Activated naive CD4-positive, alpha-beta T cell treated with anti-CD3 and anti-CD28 coated beads, Interleukin-2, amount 10 ng/mL, durations not matched to agents 7 days and 5 days (primary cell): ENCODE measurements at regions of chr3 and their contacts with region 1.

Region 1: GRCh38 chr3:88003115-88003755 is 55.6 kb downstream of the CGGBP1 start:
- DNase-seq: no peak
- H3K4me3 Mint-ChIP-seq: no peak overlapping the region
- H3K27ac Mint-ChIP-seq: no peak overlapping the region
- H3K4me1 Mint-ChIP-seq: peaks cover 9% of the 10 kb centered on the region
- H3K27me3 Mint-ChIP-seq: peaks cover 5% of the 10 kb centered on the region

Region 2: DNA sequence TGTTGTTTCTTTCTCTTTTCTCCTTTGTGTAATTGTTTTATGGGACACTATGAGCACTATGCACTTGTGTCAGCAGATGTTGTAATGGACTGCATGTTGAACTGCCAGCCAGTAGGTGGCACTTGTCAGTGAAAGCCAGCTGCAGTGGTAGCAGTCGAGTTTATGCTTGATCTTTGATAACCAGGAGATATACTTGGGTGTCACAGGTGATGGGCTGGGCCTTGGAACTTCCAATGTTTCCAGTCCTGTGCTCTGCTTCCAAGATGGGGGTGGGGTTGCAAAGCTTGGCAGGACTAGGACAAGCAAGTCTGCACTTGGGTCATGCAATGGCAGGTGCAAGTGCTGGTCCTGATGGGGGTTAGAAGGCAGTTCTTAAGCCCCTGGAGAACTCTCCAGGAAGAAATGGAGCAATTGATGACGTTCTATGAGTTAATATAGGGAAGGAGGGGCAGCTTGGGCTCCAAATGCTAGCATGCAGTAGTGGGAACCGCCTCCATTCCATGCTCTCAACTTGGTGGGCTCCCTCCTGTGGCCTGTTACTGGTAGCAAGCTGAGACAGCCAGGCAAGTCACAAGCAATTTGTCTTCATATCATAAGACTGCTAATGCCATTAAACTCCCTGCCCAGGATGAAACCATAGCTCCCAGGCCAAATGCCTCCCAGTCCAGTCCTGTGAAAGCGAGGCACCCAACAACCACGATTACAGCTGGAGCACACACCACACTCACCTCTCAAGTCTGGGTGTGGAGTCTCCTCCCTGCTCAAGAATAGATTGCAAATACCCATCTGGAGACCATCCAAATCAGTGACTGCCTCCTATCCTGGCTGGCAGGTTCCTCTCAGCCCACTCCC is 231.7 kb before region 1 on chr3:
- CTCF ChIA-PET with region 1: interaction called, 17 read pairs
- DNase-seq: peak; percentile 55
- H3K4me3 Mint-ChIP-seq: no peak overlapping the region
- H3K27ac Mint-ChIP-seq: no peak overlapping the region
- H3K4me1 Mint-ChIP-seq: no peaks in the 10 kb centered on the region
- H3K27me3 Mint-ChIP-seq: peaks cover 3% of the 10 kb centered on the region

Region 3: DNA sequence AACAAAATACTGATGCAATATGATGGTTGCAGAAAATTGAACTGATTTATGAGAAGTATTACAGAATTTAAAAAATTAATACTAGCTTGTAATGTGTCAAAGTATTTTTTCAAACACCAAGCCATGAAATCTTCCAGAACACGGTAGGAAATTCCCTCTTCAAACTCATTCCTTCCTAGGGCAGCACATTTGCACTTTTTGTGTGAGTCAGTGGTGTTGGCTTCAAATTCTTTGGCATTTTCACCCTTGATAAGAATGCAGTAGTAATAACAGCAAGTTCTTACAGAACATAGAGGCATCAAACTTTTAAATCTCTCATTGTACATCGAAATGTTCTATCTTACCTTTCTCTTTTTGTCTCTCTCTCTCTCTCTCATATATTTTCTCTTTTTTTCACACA is 136.2 kb before region 1 on chr3:
- CTCF ChIA-PET with region 1: no interaction called
- DNase-seq: no peak
- H3K4me3 Mint-ChIP-seq: no peak overlapping the region
- H3K27ac Mint-ChIP-seq: no peak overlapping the region
- H3K4me1 Mint-ChIP-seq: no peaks in the 10 kb centered on the region
- H3K27me3 Mint-ChIP-seq: no peaks in the 10 kb centered on the region

Region 4: GRCh38 chr3:88031642-88032077 is 28.4 kb after region 1 on chr3:
- CTCF ChIA-PET with region 1: no interaction called
- DNase-seq: peak; percentile 40
- H3K4me3 Mint-ChIP-seq: peak overlapping the region; percentile 74
- H3K27ac Mint-ChIP-seq: peak overlapping the region; percentile 83
- H3K4me1 Mint-ChIP-seq: peaks cover 35% of the 10 kb centered on the region
- H3K27me3 Mint-ChIP-seq: no peaks in the 10 kb centered on the region